Dorsolateral prefrontal cortex (tissue), 120 donors: ENCODE measurements at regions of chr10 and their contacts with region 1.

Region 1: GRCh38 chr10:125822878-125823662 is at the starts of genes BCCIP and UROS:
- DNase-seq: peak; percentile 81 to 91 (median 86)
- H3K4me3 ChIP-seq: peak within 1 kb of the TSS; percentile 60 to 100 (median 97)
- H3K27ac ChIP-seq: peak within 1 kb of the TSS; percentile 81 to 99 (median 96)
- H3K27me3 ChIP-seq: no peaks in the 10 kb centered on the region
- CTCF ChIP-seq: peak in 25 of 56 donors; percentile 2 to 42 (median 20)
- total RNA-seq, gene BCCIP: 23.8 to 46.6 (median 33.8) TPM
- total RNA-seq, gene UROS: 47.8 to 122 (median 86.3) TPM

Region 2: DNA sequence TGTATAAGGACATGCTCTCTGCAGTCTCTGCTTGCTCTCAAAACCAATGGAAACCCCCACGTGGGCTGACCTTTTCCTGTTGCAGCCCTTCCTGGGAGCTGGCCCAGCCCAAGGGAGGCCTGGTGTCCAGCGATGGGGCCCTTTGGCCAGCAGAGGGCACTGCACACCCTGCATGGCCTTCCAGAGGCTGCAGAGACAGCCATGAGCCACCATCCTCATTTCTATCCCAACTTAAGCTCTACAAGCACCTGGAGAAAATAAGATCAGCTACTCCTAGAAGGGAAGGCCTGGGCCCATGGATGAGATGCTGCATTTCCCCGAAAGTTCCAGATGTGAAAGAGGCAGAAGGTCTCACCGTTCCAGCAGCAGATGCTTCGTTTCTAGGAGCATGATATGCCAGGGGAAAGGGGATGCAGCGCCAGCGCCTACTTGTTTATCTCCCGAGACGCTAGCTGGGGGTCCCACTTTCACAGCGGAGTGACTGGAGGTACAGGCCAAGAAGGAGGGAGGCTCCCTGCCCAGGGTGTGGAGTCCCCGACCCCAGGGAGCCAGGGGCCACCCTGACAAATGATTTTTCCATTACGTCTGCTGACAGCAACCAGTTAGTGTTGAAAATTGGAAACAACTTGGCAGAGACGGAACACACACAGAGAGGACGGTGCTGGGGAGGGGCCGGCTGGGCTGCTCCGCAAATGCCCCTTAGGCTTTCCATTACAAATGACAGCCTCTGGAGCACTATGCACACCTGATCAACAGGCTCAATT is 774.8 kb before region 1 on chr10:
- intact Hi-C with region 1: no loop called
- DNase-seq: peak; percentile 78 to 93 (median 87)
- H3K4me3 ChIP-seq: peak overlapping the region in 2 of 59 donors; percentile 6 to 8
- H3K27ac ChIP-seq: peak overlapping the region in 26 of 59 donors; percentile 1 to 71 (median 34)
- H3K27me3 ChIP-seq: no peaks in the 10 kb centered on the region
- CTCF ChIP-seq: peak; percentile 71 to 99 (median 97)

Region 3: DNA sequence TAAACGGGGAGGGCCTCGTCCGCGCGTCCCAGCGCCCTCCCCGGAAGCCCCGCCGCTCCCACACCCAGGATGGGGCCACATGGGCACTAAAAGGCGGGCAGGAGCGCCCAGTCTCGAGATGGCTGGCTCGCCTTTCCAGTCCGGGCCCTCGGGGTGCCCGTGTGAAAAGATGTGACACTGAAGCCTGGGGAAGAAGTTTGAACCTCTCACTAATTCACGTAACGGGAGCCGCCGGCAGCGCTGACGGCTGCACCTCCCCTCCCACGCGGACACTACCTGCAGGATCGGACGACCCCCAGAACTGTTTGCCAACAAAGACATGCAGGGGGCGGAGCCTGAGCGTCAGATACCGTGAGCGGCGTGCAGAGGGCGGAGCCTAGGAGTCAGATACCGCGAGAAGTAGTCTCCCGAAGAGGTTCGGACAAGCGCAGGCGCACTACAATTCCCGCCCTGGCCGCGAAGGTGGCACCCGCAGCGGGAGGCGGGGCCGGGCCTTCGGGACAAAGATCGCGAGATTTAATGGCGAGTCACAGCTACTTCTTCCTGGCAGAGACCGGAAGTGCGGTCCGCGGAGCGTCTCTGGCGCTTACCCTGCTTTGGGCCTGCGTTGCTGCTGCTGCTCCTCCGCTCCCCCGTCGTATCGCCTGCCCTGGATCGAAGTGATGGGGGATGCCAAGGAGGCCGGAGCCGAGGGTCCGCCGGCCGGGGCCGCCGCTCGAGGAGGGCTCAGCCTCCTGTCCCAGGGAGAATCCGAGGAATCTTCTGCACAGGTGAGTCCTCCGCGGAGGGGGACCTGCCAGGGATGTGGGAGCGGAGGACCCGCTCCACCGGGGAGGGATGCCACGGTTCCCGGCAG is 103.7 kb before region 1 on chr10 and contains the start of gene EDRF1:
- intact Hi-C with region 1: loop called (anchors 5 to 10 kb)
- DNase-seq: peak; percentile 97 to 100 (median 98)
- H3K4me3 ChIP-seq: peak within 1 kb of the TSS; percentile 67 to 100 (median 95)
- H3K27ac ChIP-seq: peak within 1 kb of the TSS in 58 of 59 donors; percentile 60 to 96 (median 89)
- H3K27me3 ChIP-seq: no peaks in the 10 kb centered on the region
- CTCF ChIP-seq: peak in 30 of 56 donors; percentile 11 to 54 (median 31)
- total RNA-seq, gene EDRF1: 19.9 to 42.5 (median 31.0) TPM

Region 4: GRCh38 chr10:125768219-125768855 is 54.7 kb before region 1 on chr10:
- intact Hi-C with region 1: no loop called
- DNase-seq: no peak
- H3K4me3 ChIP-seq: no peak overlapping the region
- H3K27ac ChIP-seq: peak overlapping the region in 14 of 59 donors; percentile 0 to 63 (median 18)
- H3K27me3 ChIP-seq: no peaks in the 10 kb centered on the region
- CTCF ChIP-seq: no peak

Region 5: DNA sequence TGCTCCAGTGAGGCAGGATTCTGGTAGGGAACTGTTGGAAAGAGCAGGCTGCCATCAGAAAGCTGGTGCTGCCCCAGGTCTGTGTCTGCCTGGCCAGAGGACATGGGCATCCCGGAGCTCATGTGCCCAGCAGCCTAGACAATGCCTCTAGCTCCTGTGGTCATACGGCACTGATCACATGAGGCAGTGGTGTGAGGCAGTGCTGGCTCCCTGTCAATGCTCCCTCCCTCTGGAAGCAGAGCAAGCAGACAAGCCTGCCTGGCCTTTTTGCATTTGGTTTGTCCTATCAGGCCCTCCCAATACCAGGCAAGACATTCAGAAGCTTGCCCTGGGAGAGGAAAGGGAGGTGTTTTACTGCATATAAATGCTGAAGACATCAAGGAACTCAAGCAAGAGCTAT is 27.9 kb before region 1 on chr10:
- intact Hi-C with region 1: loop called in 1 of 2 experiments (anchors 2 kb)
- DNase-seq: peak; percentile 11 to 96 (median 89)
- H3K4me3 ChIP-seq: peak overlapping the region in 34 of 59 donors; percentile 0 to 46 (median 22)
- H3K27ac ChIP-seq: peak overlapping the region; percentile 2 to 96 (median 85)
- H3K27me3 ChIP-seq: no peaks in the 10 kb centered on the region
- CTCF ChIP-seq: no peak

Region 6: DNA sequence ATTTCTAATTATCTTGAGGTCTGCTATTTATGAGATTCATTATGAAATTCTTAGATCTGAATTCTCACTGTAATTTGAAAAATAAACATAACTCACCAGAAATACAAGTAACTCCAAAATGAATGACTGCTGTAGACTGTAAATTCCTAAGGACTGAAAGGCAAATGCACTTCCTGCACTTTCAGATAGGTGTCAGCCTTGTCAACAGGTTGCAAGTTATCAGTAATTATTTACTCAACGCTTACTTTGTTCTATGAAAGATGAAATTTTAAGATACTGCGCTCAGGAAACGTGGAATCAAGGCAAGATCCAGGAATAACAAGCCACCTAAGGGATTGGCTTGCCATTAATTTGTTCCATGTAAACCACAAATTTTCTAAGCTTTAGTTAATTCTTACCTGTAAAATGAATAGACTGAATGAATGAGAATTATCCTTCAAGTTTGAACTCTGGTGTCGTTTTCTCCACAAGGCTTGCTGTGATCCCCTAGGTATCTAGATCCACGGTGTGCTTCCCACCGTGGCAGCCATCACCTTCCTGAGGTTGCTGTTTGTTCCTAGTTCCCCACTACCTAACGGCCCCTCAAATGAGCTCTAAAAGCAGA is 45.4 kb after region 1 on chr10:
- intact Hi-C with region 1: no loop called
- DNase-seq: no peak
- H3K4me3 ChIP-seq: no peak overlapping the region
- H3K27ac ChIP-seq: no peak overlapping the region
- H3K27me3 ChIP-seq: no peaks in the 10 kb centered on the region
- CTCF ChIP-seq: peak; percentile 53 to 89 (median 75)

Region 7: DNA sequence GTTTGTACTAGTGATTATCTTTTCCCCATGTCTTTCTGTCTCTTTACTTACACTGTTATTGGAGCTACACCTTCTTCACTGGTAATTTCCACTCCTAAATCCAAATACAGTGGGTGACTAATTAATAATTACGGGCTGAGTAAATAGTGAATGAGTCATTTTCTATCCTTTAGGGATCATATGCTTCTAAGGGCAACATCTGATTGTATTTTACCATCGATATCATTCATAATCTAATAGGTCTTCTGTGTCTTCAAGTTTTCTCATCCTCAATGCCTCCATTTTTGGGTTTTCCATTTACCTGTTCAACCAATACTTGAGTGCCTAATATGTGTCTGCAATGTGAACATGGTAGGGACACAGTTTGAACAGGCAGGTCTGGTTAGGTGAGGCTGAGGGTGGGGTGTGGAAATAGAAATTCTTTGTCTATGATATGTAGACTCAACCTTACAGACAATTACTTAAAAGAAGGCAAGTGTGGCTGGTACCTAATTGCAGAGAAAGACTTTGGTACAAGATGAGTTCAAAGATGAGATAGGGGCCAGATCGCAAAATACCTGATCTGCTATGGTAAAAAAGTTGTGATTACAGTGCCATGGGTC is 63.9 kb after region 1 on chr10:
- intact Hi-C with region 1: loop called in 1 of 2 experiments (anchors 10 kb)
- DNase-seq: no peak
- H3K4me3 ChIP-seq: no peak overlapping the region
- H3K27ac ChIP-seq: no peak overlapping the region
- H3K27me3 ChIP-seq: no peaks in the 10 kb centered on the region
- CTCF ChIP-seq: no peak